Activated naive CD4-positive, alpha-beta T cell treated with anti-CD3 and anti-CD28 coated beads for 36 hours (primary cell): ENCODE measurements at regions of chr7 and their contacts with region 1.

Region 1: GRCh38 chr7:55887821-55888247 is 578 bp downstream of the ZNF713 start:
- DNase-seq: no peak
- H3K4me3 Mint-ChIP-seq: peak overlapping the region; percentile 72
- H3K27ac Mint-ChIP-seq: peak overlapping the region; percentile 59
- H3K4me1 Mint-ChIP-seq: peaks cover 5% of the 10 kb centered on the region
- H3K27me3 Mint-ChIP-seq: no peaks in the 10 kb centered on the region

Region 2: GRCh38 chr7:55657654-55658053 is 230.2 kb before region 1 on chr7:
- CTCF ChIA-PET with region 1: no interaction called
- intact Hi-C with region 1: no loop called
- DNase-seq: no peak
- H3K4me3 Mint-ChIP-seq: no peak overlapping the region
- H3K27ac Mint-ChIP-seq: no peak overlapping the region
- H3K4me1 Mint-ChIP-seq: no peaks in the 10 kb centered on the region
- H3K27me3 Mint-ChIP-seq: no peaks in the 10 kb centered on the region

Region 3: GRCh38 chr7:55951637-55952351 is 64.0 kb after region 1 on chr7 and contains the start of gene MRPS17:
- CTCF ChIA-PET with region 1: no interaction called
- intact Hi-C with region 1: loop called (anchors 1 kb)
- DNase-seq: peak; percentile 96
- H3K4me3 Mint-ChIP-seq: peak within 1 kb of the TSS; percentile 99
- H3K27ac Mint-ChIP-seq: peak within 1 kb of the TSS; percentile 94
- H3K4me1 Mint-ChIP-seq: peaks cover 28% of the 10 kb centered on the region
- H3K27me3 Mint-ChIP-seq: peaks cover 2% of the 10 kb centered on the region
- total RNA-seq, gene MRPS17: 17.3 to 18.7 TPM

Region 4: GRCh38 chr7:56063882-56064625 is 176.2 kb after region 1 on chr7 and contains the start of gene SUMF2:
- CTCF ChIA-PET with region 1: no interaction called
- intact Hi-C with region 1: loop called (anchors 5 kb)
- DNase-seq: peak; percentile 90
- H3K4me3 Mint-ChIP-seq: peak within 1 kb of the TSS; percentile 88
- H3K27ac Mint-ChIP-seq: peak within 1 kb of the TSS; percentile 91
- H3K4me1 Mint-ChIP-seq: peaks cover 41% of the 10 kb centered on the region
- H3K27me3 Mint-ChIP-seq: no peaks in the 10 kb centered on the region
- total RNA-seq, gene SUMF2: 143 to 159 TPM

Region 5: GRCh38 chr7:56106108-56107073 is 218.6 kb after region 1 on chr7 and contains the start of gene CHCHD2:
- CTCF ChIA-PET with region 1: interaction called, 3 read pairs
- intact Hi-C with region 1: loop called (anchors 1 kb)
- DNase-seq: peak; percentile 97
- H3K4me3 Mint-ChIP-seq: peak within 1 kb of the TSS; percentile 90
- H3K27ac Mint-ChIP-seq: peak within 1 kb of the TSS; percentile 98
- H3K4me1 Mint-ChIP-seq: peaks cover 31% of the 10 kb centered on the region
- H3K27me3 Mint-ChIP-seq: no peaks in the 10 kb centered on the region
- total RNA-seq, gene CHCHD2: 793 TPM